ENCODE measurements at regions of chr3 and their contacts with region 1.

Region 1: GRCh38 chr3:109081746-109082510 is 36.0 kb downstream of the MORC1 start:
- DNase-seq: peak; percentile 49
- CTCF ChIP-seq: peak; percentile 78

Region 2: DNA sequence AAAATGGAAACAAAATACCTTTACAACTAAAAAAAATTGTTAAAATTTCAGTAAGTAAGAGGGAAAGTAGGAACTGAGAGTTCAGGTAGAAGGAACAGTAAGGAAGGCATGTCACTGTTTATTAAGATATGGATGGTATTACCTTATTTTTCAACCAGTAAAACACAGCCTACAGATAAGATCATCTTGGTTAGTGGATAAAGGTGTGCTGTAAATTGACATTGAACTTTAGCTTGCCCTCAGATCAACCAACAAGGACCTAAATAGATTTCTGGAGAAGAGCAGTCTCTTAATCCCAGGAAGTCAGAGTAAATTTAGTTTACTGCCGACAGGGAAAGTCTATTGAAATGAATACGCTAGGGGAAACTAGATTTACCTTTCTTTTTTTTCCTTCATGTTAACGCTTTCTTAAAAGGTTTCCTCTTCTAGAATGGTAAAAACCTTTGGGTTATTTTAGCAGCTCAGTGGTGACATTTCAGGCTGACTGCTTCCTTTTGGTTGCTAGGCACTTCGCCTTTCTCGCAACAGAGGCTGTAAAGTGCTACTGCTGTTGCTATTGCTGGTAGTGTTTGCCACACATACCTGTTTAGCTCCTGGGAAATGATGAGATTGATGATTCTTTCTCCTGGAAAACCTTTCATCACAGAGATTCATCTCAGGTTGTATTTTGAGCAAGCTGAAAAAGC is 479.5 kb before region 1 on chr3:
- CTCF ChIA-PET with region 1: no interaction called
- POLR2A ChIA-PET with region 1: no interaction called
- DNase-seq: peak; percentile 14
- CTCF ChIP-seq: no peak

Region 3: DNA sequence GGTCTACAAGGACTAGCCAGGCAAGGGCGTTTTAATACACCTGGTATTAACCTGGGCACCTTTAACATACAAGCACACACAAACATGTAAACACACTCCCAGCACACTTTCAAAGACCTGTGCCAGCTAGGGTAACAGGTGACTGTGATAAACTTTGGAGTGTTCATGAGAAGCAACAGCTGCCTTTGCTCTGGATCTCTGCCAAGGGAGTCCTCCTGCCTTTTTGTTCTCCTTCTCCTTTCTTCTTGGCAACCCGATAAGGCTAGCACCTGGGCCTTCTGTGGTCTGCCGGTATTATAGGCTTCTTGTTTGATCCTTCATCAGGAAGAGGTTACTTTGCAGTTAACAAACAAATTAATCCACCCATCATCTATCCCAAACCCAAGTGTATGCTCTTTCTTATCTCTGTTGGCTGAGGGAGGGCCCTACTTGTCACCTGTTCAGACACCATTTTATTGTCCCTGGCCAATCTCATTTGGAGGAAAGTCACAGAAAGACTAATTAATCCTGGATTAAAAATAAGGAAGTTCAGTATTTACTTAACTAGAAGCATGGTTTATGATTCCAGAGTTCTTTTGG is 324.4 kb before region 1 on chr3 and contains the start of gene RETNLB:
- CTCF ChIA-PET with region 1: no interaction called
- POLR2A ChIA-PET with region 1: no interaction called
- DNase-seq: no peak
- CTCF ChIP-seq: no peak

Region 4: DNA sequence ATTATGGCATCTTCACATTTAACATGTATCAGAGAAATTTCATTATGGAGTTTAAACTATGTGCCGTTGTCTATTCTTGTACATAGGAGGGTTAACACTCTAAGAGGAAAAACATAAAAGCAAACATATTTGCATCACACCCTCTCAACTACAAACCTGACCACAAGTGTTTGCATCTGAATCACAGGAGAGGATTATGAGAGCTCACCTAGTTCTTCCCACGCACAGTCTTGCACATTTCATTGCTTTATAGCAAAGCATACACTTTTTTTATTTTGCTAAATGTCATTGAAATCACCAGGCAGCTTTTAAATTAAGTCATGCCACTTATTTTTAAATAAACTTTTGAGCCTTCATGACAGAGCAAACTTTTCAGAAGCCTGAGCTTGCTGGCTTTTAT is 246.8 kb before region 1 on chr3:
- CTCF ChIA-PET with region 1: no interaction called
- POLR2A ChIA-PET with region 1: no interaction called
- DNase-seq: no peak
- CTCF ChIP-seq: no peak

Region 5: DNA sequence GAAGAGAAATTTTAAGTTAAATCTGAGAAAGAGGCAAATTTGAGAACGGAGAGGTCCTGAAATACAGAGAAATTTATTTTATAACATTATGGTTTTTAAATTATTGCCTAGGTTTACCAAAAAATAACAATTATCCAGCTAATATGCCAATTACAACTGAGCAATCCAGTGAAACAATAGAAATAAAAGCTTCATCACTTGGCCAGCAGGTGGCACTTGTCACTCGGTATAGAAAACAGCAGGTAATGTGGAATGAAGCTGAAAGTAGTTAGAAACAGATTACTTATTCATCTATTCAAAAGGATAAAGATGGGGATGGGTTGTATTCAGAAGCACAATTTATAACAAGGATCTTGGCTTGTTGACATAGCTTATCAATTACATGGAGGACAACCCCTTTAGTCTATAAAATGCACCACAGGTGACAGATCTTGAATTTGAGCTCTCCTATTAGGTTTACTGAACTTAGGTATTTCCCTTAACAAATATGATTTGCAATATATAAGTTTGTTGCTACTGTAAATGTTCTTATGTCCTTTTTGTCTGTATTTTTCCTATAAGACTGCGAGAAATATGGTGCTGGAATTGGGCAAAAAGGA is 58.2 kb before region 1 on chr3:
- CTCF ChIA-PET with region 1: interaction called, 120 read pairs
- POLR2A ChIA-PET with region 1: no interaction called
- DNase-seq: peak; percentile 29
- CTCF ChIP-seq: peak; percentile 86

Region 6: GRCh38 chr3:109071350-109072142 is 10.4 kb before region 1 on chr3:
- CTCF ChIA-PET with region 1: interaction called, 15 read pairs
- POLR2A ChIA-PET with region 1: no interaction called
- DNase-seq: no peak
- CTCF ChIP-seq: no peak

Region 7: GRCh38 chr3:109098079-109098644 is 16.2 kb after region 1 on chr3:
- CTCF ChIA-PET with region 1: interaction called, 15 read pairs
- POLR2A ChIA-PET with region 1: no interaction called
- DNase-seq: no peak
- CTCF ChIP-seq: peak; percentile 27

Measured in GM10248 (cell line).